ENCODE measurements at regions of chr15 and their contacts with region 1.

Region 1: GRCh38 chr15:47961401-47962090 is 159.2 kb upstream of the SLC24A5 start:
- DNase-seq: no peak
- H3K4me3 ChIP-seq: no peak overlapping the region
- H3K27ac ChIP-seq: no peak overlapping the region
- H3K4me1 ChIP-seq: no peaks in the 10 kb centered on the region
- H3K27me3 ChIP-seq: no peaks in the 10 kb centered on the region
- CTCF ChIP-seq: no peak

Region 2: DNA sequence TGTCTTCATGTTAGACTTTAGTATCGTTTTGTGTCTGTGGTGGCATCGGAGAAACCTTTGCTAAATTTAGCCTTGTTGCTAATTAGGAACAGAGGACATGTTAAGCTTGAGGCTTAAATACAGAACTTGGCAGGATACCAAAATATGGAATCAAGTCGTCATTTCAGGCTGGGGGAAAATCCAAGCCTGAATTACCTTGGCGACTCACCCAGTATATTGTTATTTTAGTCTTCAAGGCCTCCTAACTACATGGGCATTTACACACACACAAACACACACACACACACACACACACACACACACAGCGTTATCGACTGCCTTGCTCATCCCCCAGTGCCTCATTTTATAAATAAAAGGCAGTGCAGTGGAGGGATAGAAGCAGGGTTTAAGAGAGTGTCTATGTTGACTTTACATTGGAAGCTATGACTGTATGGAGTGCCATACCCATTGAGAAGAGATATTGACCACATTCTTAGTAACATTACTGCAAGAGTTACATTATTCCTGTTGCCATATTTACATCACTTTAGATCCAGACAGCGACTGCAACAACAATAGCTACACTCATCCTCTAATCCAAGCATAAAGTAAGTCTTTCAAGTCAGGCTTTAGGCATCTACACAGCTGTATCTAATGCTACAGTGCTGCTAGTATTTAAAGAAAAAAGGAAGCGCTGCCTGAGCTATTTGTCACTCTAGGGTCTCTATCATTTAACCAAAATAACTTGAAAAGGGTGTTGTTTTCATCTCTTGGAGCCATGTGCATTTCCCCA is 455.0 kb before region 1 on chr15:
- CTCF ChIA-PET with region 1: no interaction called
- dilution Hi-C with region 1: no loop called
- in situ Hi-C with region 1: loop called in 1 of 2 experiments (anchors 25 kb)
- intact Hi-C with region 1: no loop called
- DNase-seq: no peak
- H3K4me3 ChIP-seq: no peak overlapping the region
- H3K27ac ChIP-seq: no peak overlapping the region
- H3K4me1 ChIP-seq: no peaks in the 10 kb centered on the region
- H3K27me3 ChIP-seq: no peaks in the 10 kb centered on the region
- CTCF ChIP-seq: no peak

Region 3: DNA sequence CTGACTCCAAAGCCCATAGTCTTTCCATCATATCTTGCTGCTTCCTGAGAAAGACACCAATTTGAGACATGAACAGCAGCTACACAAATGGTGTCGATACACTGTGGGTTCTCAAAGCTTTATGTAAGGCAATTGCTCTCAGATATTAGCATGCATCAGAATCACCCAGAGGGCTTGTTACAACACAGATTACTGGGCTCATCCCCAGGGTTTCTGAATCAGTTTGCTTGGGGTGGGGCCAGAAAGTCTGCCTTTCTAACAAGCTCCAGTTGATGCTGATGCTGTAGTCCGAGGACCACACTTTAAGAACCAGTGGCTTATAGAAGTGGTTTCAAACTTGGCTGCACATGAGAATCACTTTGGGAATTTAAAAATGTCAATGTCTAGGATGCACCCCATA is 157.8 kb before region 1 on chr15:
- CTCF ChIA-PET with region 1: no interaction called
- dilution Hi-C with region 1: no loop called
- in situ Hi-C with region 1: no loop called
- intact Hi-C with region 1: no loop called
- DNase-seq: peak; percentile 65
- H3K4me3 ChIP-seq: no peak overlapping the region
- H3K27ac ChIP-seq: no peak overlapping the region
- H3K4me1 ChIP-seq: peaks cover 16% of the 10 kb centered on the region
- H3K27me3 ChIP-seq: no peaks in the 10 kb centered on the region
- CTCF ChIP-seq: no peak

Region 4: GRCh38 chr15:47932951-47933641 is 28.4 kb before region 1 on chr15:
- CTCF ChIA-PET with region 1: no interaction called
- dilution Hi-C with region 1: no loop called
- in situ Hi-C with region 1: no loop called
- intact Hi-C with region 1: no loop called
- DNase-seq: no peak
- H3K4me3 ChIP-seq: no peak overlapping the region
- H3K27ac ChIP-seq: no peak overlapping the region
- H3K4me1 ChIP-seq: no peaks in the 10 kb centered on the region
- H3K27me3 ChIP-seq: no peaks in the 10 kb centered on the region
- CTCF ChIP-seq: no peak

Region 5: GRCh38 chr15:48010316-48010715 is 48.8 kb after region 1 on chr15:
- CTCF ChIA-PET with region 1: no interaction called
- dilution Hi-C with region 1: loop called (anchors 5 kb)
- in situ Hi-C with region 1: no loop called
- intact Hi-C with region 1: no loop called
- DNase-seq: no peak
- H3K4me3 ChIP-seq: no peak overlapping the region
- H3K27ac ChIP-seq: no peak overlapping the region
- H3K4me1 ChIP-seq: no peaks in the 10 kb centered on the region
- H3K27me3 ChIP-seq: no peaks in the 10 kb centered on the region
- CTCF ChIP-seq: no peak

Region 6: GRCh38 chr15:48049736-48050456 is 88.3 kb after region 1 on chr15:
- CTCF ChIA-PET with region 1: no interaction called
- dilution Hi-C with region 1: no loop called
- in situ Hi-C with region 1: no loop called
- intact Hi-C with region 1: no loop called
- DNase-seq: no peak
- H3K4me3 ChIP-seq: no peak overlapping the region
- H3K27ac ChIP-seq: no peak overlapping the region
- H3K4me1 ChIP-seq: no peaks in the 10 kb centered on the region
- H3K27me3 ChIP-seq: no peaks in the 10 kb centered on the region
- CTCF ChIP-seq: no peak

Region 7: DNA sequence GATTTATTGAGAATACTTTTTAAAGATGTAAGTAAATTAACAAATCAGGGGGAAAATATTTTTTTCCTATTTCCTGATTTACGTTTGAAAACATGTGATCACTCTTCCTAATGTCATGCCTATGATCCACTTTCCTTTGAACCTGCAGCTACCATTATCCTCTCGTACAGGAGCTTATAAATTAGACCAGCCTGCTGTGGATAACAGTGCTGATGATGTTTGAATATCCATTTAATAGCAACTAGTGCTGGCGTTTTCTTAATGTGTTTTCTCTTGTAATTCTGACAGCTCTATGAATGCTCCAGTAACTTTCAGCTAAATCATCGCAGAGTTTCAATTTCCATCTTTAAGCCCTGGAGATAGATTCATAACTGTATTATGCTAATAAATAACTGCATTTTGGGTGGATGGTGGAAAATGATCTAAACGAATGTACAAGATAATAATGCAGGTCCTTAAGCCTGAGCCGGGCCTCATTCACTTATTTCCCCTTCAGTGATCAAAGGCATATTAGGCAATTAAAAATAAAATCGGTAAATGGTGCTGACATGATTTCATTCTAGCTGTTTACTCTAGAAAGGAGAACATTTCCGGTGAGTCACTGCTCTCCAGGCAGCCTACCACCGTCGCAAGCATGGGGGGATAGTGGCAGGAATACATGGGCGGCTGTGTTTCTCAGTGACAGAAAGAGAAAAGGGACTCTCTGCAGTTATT is 100.8 kb after region 1 on chr15:
- CTCF ChIA-PET with region 1: no interaction called
- dilution Hi-C with region 1: no loop called
- in situ Hi-C with region 1: no loop called
- intact Hi-C with region 1: no loop called
- DNase-seq: no peak
- H3K4me3 ChIP-seq: no peak overlapping the region
- H3K27ac ChIP-seq: no peak overlapping the region
- H3K4me1 ChIP-seq: no peaks in the 10 kb centered on the region
- H3K27me3 ChIP-seq: no peaks in the 10 kb centered on the region
- CTCF ChIP-seq: no peak

Measured in mammary epithelial cell (primary cell).